ENCODE measurements at regions of chr1 and their contacts with region 1.

Region 1: GRCh38 chr1:209095627-209096595 is 487.6 kb upstream of the CAMK1G start:
- DNase-seq: peak; percentile 99
- ATAC-seq: peak; percentile 99
- H3K4me3 ChIP-seq: 0 out of 2 replicates have a peak overlapping the region, but pooled peaks have one; percentile 4
- H3K27ac ChIP-seq: peak overlapping the region; percentile 59
- H3K4me1 ChIP-seq: peaks cover 29% of the 10 kb centered on the region
- H3K27me3 ChIP-seq: no peaks in the 10 kb centered on the region
- CTCF ChIP-seq: no peak

Region 2: GRCh38 chr1:208919371-208919770 is 176.5 kb before region 1 on chr1:
- CTCF ChIA-PET with region 1: no interaction called
- POLR2A ChIA-PET with region 1: no interaction called
- intact Hi-C with region 1: loop called (anchors 1 kb)
- DNase-seq: peak; percentile 94
- ATAC-seq: peak; percentile 63
- H3K4me3 ChIP-seq: no peak overlapping the region
- H3K27ac ChIP-seq: peak overlapping the region; percentile 91
- H3K4me1 ChIP-seq: peaks cover 63% of the 10 kb centered on the region
- H3K27me3 ChIP-seq: no peaks in the 10 kb centered on the region
- CTCF ChIP-seq: no peak

Region 3: DNA sequence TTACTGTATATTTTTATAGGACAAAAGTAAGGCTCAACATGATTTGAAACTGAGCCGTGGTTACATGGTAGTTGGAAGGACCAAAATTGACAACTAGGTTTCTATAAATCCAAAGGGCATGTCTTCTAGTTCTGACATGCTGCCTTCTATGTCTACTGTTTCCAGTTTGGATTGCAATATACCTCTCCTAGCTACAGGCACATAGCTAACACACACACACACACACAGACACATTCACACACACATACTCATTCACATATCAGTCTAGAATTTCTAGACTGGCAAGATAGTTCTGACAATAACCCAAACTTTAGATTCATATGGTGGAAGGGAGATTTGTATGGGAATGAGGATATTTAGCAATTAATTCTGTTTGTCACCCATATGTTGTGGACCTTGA is 57.2 kb before region 1 on chr1:
- CTCF ChIA-PET with region 1: no interaction called
- POLR2A ChIA-PET with region 1: no interaction called
- intact Hi-C with region 1: loop called (anchors 1 kb)
- DNase-seq: peak; percentile 49
- ATAC-seq: no peak; the same call in 1 of the 2 replicates
- H3K4me3 ChIP-seq: peak overlapping the region; percentile 8; the same call in 1 of the 2 replicates
- H3K27ac ChIP-seq: peak overlapping the region; percentile 86
- H3K4me1 ChIP-seq: peaks cover 35% of the 10 kb centered on the region
- H3K27me3 ChIP-seq: no peaks in the 10 kb centered on the region
- CTCF ChIP-seq: no peak

Region 4: GRCh38 chr1:209168204-209168603 is 72.3 kb after region 1 on chr1:
- CTCF ChIA-PET with region 1: no interaction called
- POLR2A ChIA-PET with region 1: no interaction called
- intact Hi-C with region 1: loop called (anchors 1 kb)
- DNase-seq: peak; percentile 99
- ATAC-seq: peak; percentile 95
- H3K4me3 ChIP-seq: no peak overlapping the region
- H3K27ac ChIP-seq: peak overlapping the region; percentile 55
- H3K4me1 ChIP-seq: peaks cover 26% of the 10 kb centered on the region
- H3K27me3 ChIP-seq: no peaks in the 10 kb centered on the region
- CTCF ChIP-seq: no peak

Region 5: GRCh38 chr1:209549443-209550205 is 453.7 kb after region 1 on chr1:
- CTCF ChIA-PET with region 1: no interaction called
- POLR2A ChIA-PET with region 1: no interaction called
- intact Hi-C with region 1: no loop called
- DNase-seq: no peak
- ATAC-seq: no peak
- H3K4me3 ChIP-seq: no peak overlapping the region
- H3K27ac ChIP-seq: no peak overlapping the region
- H3K4me1 ChIP-seq: peaks cover 9% of the 10 kb centered on the region; the same call in 1 of the 2 replicates
- H3K27me3 ChIP-seq: no peaks in the 10 kb centered on the region
- CTCF ChIP-seq: peak; percentile 48; the same call in 1 of the 2 replicates